GM10248 (cell line): ENCODE measurements at regions of chr2 and their contacts with region 1.

Region 1: GRCh38 chr2:41698678-41699422 is 349.0 kb upstream of the PKDCC start:
- DNase-seq: peak; percentile 43
- CTCF ChIP-seq: peak; percentile 73

Region 2: DNA sequence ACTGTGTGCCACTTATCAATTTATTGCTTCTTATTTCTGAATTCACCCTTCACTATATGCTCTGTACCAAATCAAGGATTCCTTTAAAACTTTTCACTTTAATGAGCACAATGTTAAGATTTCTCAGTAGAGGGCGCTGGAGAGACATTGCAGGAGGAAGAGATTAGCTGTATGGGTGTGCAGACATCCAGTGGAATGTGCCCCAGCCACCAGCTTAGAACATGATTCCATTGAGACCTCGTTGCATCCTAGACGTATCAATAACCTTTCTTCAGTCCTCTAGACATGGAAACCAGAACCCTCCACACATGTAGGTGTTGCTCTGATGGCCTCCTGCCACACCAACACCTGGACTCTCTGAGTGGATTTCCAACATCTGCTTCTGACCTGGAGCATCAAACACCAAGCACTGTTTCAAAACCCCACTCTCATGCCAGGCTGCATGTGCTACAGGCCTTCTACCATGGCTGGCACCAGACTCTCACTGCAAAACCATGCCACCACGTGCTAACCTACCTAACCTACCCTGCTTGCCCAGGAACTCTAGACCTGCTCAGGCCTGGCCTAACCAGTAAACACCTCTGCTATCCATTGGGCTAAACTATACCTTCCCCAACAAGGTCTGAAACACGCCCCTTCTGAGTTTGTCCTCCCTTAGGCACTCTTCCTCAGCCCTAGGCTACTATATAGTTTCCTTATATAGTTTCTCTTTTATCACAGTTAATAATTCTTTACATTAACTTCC is 284.2 kb before region 1 on chr2:
- CTCF ChIA-PET with region 1: interaction called, 14 read pairs
- POLR2A ChIA-PET with region 1: no interaction called
- DNase-seq: peak; percentile 14
- CTCF ChIP-seq: peak; percentile 46

Region 3: DNA sequence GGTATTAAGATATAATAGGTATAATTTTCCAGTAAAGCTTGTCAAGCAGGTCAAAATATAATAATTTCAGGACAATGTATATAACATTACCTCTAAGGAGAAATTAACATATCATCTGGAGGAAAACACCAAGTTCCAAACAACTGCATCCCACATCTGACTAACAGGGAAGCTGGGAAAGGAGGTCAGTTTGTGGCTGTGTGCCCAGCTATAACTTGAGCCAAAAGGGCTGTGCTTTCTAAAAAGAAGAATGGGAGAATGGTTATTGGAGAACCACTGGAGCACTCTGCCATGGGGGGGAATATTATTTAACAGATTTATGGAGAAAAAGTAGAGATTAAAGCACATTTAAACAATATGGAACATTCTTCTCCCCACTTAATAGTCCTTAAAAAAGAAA is 41.6 kb before region 1 on chr2:
- CTCF ChIA-PET with region 1: no interaction called
- POLR2A ChIA-PET with region 1: no interaction called
- DNase-seq: no peak
- CTCF ChIP-seq: no peak

Region 4: GRCh38 chr2:41686156-41686555 is 12.7 kb before region 1 on chr2:
- CTCF ChIA-PET with region 1: interaction called, 12 read pairs
- POLR2A ChIA-PET with region 1: no interaction called
- DNase-seq: no peak
- CTCF ChIP-seq: no peak

Region 5: DNA sequence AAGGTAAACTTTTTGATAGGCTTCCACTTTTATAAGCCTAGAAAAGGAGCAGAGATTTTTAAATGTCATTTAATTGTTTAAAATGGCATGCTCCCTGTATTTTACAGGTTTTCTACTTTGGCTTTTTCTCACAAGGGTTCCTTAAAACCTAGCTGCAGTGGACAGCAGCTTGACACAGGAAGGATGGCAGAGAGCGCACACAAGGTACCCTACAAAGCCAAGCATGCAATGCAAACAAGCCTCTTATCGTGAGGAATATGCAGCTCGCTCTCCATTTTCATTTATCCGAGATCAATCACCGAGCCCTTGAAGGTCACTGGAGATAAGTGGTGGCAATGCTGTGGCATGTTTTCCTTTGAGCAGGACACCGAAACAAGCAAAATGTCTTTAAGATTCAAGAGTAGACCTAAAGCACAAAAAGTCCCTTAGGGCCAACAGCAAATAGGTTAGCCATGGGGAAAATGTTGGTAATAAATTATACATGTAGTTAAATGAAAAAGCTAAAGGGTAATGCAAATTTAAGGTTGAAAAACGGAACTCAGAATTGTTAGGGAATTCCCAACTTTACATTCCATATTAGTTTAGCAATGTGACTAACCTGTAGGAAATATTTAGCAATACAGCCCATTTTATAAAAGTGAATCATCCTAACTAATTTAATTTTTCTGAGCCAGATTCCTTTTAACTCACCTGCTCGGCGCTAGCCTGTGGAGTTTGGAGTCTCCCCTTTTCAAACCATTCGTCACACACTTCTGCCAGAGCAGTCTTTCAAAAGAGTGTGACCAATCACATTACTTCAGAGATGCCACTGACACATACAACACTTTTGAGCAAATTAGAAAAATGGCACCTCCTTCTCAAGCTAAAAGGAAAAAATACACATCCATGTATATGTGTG is 11.1 kb after region 1 on chr2:
- CTCF ChIA-PET with region 1: interaction called, 17 read pairs
- POLR2A ChIA-PET with region 1: no interaction called
- DNase-seq: no peak
- CTCF ChIP-seq: no peak

Region 6: DNA sequence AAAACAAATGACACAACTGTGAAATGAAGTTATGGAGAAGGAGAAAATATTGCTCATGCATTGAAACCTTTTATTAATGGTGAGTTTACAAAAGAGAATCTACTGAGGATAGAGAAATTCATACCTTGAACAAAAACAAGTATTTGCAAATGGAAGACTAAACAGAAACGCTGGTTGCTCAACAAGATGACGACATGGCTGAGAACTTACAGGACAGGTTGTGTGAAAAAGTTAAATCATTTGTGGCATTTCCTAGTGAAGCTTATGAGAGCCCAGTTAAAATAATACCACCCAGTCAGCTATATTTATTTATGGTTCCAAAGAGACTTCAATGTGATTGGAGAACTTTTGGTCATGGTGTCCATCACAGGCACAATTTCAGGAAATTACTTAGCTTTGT is 200.3 kb after region 1 on chr2:
- CTCF ChIA-PET with region 1: no interaction called
- POLR2A ChIA-PET with region 1: no interaction called
- DNase-seq: no peak
- CTCF ChIP-seq: no peak